B cell (primary cell): ENCODE measurements at regions of chr5 and their contacts with region 1.

Region 1: GRCh38 chr5:37005946-37006540 is 129.5 kb downstream of the NIPBL start:
- DNase-seq: peak; percentile 23
- ATAC-seq: no peak
- H3K4me3 ChIP-seq: no peak overlapping the region
- H3K4me3 Mint-ChIP-seq: no peak overlapping the region
- H3K27ac ChIP-seq: no peak overlapping the region
- H3K27ac Mint-ChIP-seq: no peak overlapping the region
- H3K4me1 ChIP-seq: no peaks in the 10 kb centered on the region
- H3K4me1 Mint-ChIP-seq: no peaks in the 10 kb centered on the region
- H3K27me3 ChIP-seq: no peaks in the 10 kb centered on the region
- H3K27me3 Mint-ChIP-seq: no peaks in the 10 kb centered on the region
- CTCF ChIP-seq: peak; percentile 66

Region 2: GRCh38 chr5:36734422-36734821 is 271.6 kb before region 1 on chr5:
- CTCF ChIA-PET with region 1: interaction called, 67 read pairs
- POLR2A ChIA-PET with region 1: no interaction called
- intact Hi-C with region 1: loop called (anchors 2 kb)
- DNase-seq: no peak
- ATAC-seq: no peak
- H3K4me3 ChIP-seq: no peak overlapping the region
- H3K4me3 Mint-ChIP-seq: no peak overlapping the region
- H3K27ac ChIP-seq: no peak overlapping the region
- H3K27ac Mint-ChIP-seq: no peak overlapping the region
- H3K4me1 ChIP-seq: no peaks in the 10 kb centered on the region
- H3K4me1 Mint-ChIP-seq: peaks cover under 1% of the 10 kb centered on the region
- H3K27me3 ChIP-seq: peaks cover 0 to 4% (median 1%) of the 10 kb centered on the region in 4 experiments
- H3K27me3 Mint-ChIP-seq: peaks cover 15% of the 10 kb centered on the region
- CTCF ChIP-seq: peak; percentile 13

Region 3: GRCh38 chr5:36739751-36740221 is 266.3 kb before region 1 on chr5:
- CTCF ChIA-PET with region 1: interaction called, 67 read pairs
- POLR2A ChIA-PET with region 1: no interaction called
- intact Hi-C with region 1: loop called (anchors 2 kb)
- DNase-seq: peak; percentile 77
- ATAC-seq: peak; percentile 78
- H3K4me3 ChIP-seq: no peak overlapping the region
- H3K4me3 Mint-ChIP-seq: no peak overlapping the region
- H3K27ac ChIP-seq: no peak overlapping the region
- H3K27ac Mint-ChIP-seq: no peak overlapping the region
- H3K4me1 ChIP-seq: peaks cover 11% of the 10 kb centered on the region in 2 donors
- H3K4me1 Mint-ChIP-seq: peaks cover 13% of the 10 kb centered on the region
- H3K27me3 ChIP-seq: peaks cover 0 to 17% (median 5%) of the 10 kb centered on the region in 4 experiments
- H3K27me3 Mint-ChIP-seq: peaks cover 27% of the 10 kb centered on the region
- CTCF ChIP-seq: peak; percentile 82